Activated naive CD4-positive, alpha-beta T cell treated with anti-CD3 and anti-CD28 coated beads for 36 hours (primary cell): ENCODE measurements at regions of chr7 and their contacts with region 1.

Region 1: DNA sequence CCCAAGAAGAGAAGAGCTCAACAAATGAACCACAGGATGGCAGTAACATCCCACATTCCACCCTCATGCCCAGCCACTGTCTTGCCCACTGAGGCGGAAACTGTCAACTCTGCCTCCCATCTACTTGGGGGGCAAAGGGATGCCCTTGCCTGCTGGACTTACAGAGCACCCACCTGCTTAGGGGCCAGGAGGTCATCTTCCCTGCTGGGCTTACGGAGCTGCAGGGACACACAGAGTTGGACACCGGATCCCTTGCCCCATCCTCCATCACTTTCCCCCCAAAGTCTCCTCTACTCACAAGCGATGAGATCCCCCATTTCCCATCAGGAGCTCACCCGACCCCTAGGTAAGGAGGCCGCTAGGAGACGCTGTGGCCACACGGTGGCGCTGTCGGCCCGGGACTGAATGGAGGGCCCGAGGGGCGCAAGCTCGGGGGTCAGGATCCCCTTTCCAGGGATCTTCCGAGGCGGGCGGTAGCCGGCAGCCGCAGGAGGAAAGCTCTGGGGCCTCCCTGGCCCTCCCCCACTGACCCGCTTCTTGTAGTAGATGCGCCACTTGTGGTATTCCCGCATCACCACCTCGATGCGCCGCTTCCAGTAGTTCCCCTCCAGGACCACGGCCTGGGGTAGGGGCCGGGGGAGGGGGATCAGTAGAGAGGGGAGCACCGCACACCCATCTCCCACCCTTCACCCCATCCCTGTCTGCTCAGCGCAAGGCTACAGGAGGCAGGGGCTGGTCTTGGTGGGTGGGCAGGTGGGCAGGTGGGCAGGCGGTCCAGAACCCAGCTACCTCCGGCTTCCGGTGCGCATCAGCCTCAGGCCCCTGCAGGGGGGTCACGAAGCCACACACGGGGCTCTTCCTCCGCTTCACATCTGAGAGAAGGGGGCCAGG is 17.3 kb downstream of the MLXIPL start:
- DNase-seq: peak; percentile 63
- H3K4me3 Mint-ChIP-seq: no peak overlapping the region
- H3K27ac Mint-ChIP-seq: no peak overlapping the region
- H3K4me1 Mint-ChIP-seq: no peaks in the 10 kb centered on the region
- H3K27me3 Mint-ChIP-seq: peaks cover 6% of the 10 kb centered on the region

Region 2: DNA sequence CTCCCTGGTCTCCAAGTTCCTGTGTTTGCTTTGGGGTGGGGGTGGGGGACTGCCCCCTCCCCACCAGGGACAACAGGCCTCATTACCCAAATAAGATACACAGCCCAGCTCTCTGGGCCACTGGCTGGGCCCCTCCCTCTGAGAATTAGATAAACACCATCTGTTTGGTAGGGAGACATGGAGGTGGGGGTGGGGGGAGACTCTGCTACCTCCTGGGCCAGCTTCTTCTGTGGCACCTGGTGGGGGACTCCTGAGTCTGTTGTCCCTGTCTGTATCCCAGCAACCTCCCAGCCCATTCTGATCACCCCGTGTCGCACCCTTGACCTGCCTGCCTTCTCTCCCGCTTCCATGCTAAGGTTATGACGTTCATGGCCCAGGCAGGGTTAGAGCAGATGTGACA is 11.5 kb after region 1 on chr7:
- CTCF ChIA-PET with region 1: interaction called, 14 read pairs
- intact Hi-C with region 1: no loop called
- DNase-seq: no peak
- H3K4me3 Mint-ChIP-seq: no peak overlapping the region
- H3K27ac Mint-ChIP-seq: no peak overlapping the region
- H3K4me1 Mint-ChIP-seq: peaks cover 4% of the 10 kb centered on the region
- H3K27me3 Mint-ChIP-seq: peaks cover 25% of the 10 kb centered on the region

Region 3: DNA sequence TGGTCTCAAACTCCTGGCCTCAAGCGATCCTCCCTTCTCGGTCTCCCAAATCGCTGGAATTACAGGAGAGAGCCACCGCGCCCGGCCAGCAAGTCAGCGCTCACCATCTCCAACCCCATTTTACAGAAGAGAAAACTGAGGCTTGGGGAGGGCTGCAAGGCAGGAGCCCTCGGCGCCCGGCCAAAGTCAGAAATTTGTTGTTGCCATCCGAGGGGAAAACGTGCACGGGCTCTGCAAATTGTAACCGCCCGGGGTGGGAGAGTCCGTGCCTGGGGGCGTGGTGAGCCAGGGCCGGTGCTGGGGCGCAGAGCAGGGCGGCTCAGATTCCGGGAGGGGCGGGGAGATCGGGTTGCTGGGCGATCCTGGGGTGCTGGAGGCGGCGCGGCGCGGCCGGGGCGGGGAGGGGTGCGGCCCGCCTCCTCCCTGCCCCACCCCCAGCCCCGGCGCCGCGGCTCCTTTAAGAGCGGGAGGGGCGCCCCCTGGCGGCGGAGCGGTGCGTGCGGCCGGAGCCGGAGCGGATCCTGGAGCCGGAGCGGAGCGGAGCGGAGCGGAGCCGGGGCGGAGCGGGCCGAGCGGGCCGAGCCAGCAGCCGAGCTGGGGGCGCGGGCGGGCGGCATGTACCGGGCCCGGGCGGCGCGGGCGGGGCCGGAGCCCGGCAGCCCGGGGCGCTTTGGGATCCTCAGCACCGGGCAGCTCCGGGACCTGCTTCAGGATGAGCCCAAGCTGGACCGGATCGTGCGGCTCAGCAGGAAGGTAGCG is 60.5 kb after region 1 on chr7 and contains the start of gene VPS37D:
- CTCF ChIA-PET with region 1: interaction called, 11 read pairs
- intact Hi-C with region 1: loop called (anchors 1 kb)
- DNase-seq: peak; percentile 91
- H3K4me3 Mint-ChIP-seq: peak within 1 kb of the TSS; percentile 63
- H3K27ac Mint-ChIP-seq: no peak within 1 kb of the TSS
- H3K4me1 Mint-ChIP-seq: peaks cover 8% of the 10 kb centered on the region
- H3K27me3 Mint-ChIP-seq: peaks cover 34% of the 10 kb centered on the region
- total RNA-seq, gene VPS37D: not detected

Region 4: DNA sequence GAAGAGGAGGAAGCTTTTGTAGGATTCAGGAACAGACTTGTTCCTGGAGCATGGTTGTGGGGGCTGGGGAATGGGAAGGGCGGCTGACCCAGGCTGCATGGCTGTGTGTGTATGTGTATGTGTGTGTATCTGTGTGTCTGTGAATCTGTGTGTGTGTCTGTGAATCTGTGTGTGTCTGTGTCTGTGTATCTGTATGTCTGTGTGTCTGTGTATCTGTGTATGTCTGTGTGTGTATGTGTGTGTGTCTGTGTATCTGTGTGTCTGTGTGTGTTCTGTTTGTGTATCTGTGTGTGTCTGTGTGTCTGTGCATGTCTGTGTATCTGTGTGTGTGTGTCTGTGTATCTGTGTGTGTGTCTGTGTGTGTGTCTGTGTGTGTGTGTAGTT is 119.0 kb after region 1 on chr7:
- CTCF ChIA-PET with region 1: interaction called, 51 read pairs
- intact Hi-C with region 1: loop called (anchors 1 kb)
- DNase-seq: no peak
- H3K4me3 Mint-ChIP-seq: no peak overlapping the region
- H3K27ac Mint-ChIP-seq: no peak overlapping the region
- H3K4me1 Mint-ChIP-seq: no peaks in the 10 kb centered on the region
- H3K27me3 Mint-ChIP-seq: peaks cover 8% of the 10 kb centered on the region